ENCODE measurements at regions of chr1 and their contacts with region 1.

Region 1: GRCh38 chr1:21232044-21232443 is 55.3 kb upstream of the EIF4G3 start:
- DNase-seq: peak in 2 of 5 donors; percentile 45 to 56
- ATAC-seq: peak; percentile 19 to 75 (median 70)
- H3K4me3 ChIP-seq: no peak overlapping the region
- H3K27ac ChIP-seq: no peak overlapping the region
- H3K4me1 ChIP-seq: peaks cover 0 to 16% (median 1%) of the 10 kb centered on the region in 12 donors
- H3K27me3 ChIP-seq: no peaks in the 10 kb centered on the region
- CTCF ChIP-seq: peak; percentile 72 to 92 (median 82)
- POLR2A ChIP-seq: no peak

Region 2: GRCh38 chr1:21368515-21369289 is 136.7 kb after region 1 on chr1:
- intact Hi-C with region 1: loop called (anchors 1 to 5 kb)
- DNase-seq: peak; percentile 80 to 88 (median 83)
- ATAC-seq: peak; percentile 79 to 96 (median 94)
- H3K4me3 ChIP-seq: peak overlapping the region in 1 of 12 donors; percentile 12
- H3K27ac ChIP-seq: peak overlapping the region in 1 of 12 donors; percentile 17
- H3K4me1 ChIP-seq: peaks cover 0 to 12% (median 1%) of the 10 kb centered on the region in 12 donors
- H3K27me3 ChIP-seq: no peaks in the 10 kb centered on the region
- CTCF ChIP-seq: peak; percentile 96 to 100 (median 99)
- POLR2A ChIP-seq: no peak

Region 3: DNA sequence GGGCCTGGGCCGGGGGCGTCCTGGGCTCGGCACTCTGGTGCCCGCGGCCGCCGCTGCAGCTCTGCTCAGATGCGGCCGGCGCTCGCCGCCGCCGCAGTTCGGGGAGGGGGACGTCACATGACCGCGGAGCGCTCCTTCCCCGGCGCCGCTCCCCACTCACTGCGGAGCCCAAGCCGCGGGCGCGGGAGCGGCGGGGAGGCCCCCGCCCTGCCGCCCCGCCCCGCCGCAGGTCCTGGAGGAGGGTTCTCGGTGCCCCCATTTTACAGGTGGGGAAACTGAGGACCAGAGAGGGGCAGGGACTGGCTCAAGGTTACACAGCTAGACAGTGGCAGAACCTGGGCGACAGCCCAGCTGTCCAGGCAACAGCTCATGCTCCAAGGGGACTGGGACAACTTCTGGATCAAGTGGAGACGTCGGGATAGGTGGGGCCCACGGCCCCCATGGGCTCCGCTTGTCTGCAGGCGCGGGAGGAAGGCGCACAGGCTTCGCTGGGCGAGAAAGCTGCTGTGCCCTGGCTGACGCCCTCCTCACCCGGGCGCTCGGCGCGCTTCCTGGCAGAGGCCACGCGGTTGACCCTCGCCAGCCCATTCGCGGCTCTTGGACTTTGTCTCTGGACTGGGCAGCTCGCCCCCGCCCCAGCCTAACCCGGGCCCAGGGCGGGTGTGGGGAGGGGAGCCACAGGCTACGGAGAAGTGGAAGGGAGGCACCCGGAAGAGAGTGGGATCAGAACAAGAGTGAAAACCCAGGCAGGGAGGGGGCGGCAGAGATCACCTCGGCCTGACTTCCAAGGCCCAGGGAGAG is 437.4 kb after region 1 on chr1 and contains the start of gene RAP1GAP:
- intact Hi-C with region 1: loop called in 2 of 10 experiments (anchors 5 to 10 kb)
- DNase-seq: no peak
- ATAC-seq: peak in 1 of 4 donors; percentile 13
- H3K4me3 ChIP-seq: peak within 1 kb of the TSS; percentile 5 to 51 (median 42)
- H3K27ac ChIP-seq: no peak within 1 kb of the TSS
- H3K4me1 ChIP-seq: peaks cover 6 to 80% (median 43%) of the 10 kb centered on the region in 12 donors
- H3K27me3 ChIP-seq: peaks cover 0 to 48% (median 22%) of the 10 kb centered on the region in 9 donors
- CTCF ChIP-seq: no peak
- POLR2A ChIP-seq: no peak
- total RNA-seq, gene RAP1GAP: 3.1 to 8.0 (median 3.8) TPM